ENCODE measurements at regions of chr2 and their contacts with region 1.

Region 1: GRCh38 chr2:223692191-223692947 is 90.2 kb upstream of the SCG2 start:
- DNase-seq: peak; percentile 69
- H3K4me3 ChIP-seq: no peak overlapping the region
- H3K27ac ChIP-seq: no peak overlapping the region
- H3K4me1 ChIP-seq: peaks cover 13% of the 10 kb centered on the region
- H3K27me3 ChIP-seq: no peaks in the 10 kb centered on the region
- CTCF ChIP-seq: peak; percentile 64 to 82
- POLR2A ChIP-seq: no peak

Region 2: DNA sequence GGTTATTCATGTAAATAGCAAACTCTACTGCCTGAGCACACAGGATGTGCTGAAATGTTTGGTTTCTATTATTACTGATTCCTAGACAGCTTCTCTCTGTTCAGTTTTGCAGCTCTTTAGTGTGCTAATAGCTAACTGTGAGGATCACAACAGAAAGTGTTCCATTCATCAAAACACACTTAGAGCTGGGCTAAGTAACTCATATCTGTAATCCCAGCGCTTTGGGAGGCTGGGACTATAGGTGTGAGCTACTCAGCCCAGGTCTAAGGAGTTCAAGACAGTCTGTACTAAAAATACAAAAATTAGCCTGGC is 957.7 kb before region 1 on chr2:
- CTCF ChIA-PET with region 1: no interaction called
- POLR2A ChIA-PET with region 1: no interaction called
- dilution Hi-C with region 1: no loop called
- intact Hi-C with region 1: no loop called
- DNase-seq: no peak
- H3K4me3 ChIP-seq: no peak overlapping the region
- H3K27ac ChIP-seq: no peak overlapping the region
- H3K4me1 ChIP-seq: peaks cover 15% of the 10 kb centered on the region
- H3K27me3 ChIP-seq: no peaks in the 10 kb centered on the region
- CTCF ChIP-seq: no peak
- POLR2A ChIP-seq: no peak

Region 3: DNA sequence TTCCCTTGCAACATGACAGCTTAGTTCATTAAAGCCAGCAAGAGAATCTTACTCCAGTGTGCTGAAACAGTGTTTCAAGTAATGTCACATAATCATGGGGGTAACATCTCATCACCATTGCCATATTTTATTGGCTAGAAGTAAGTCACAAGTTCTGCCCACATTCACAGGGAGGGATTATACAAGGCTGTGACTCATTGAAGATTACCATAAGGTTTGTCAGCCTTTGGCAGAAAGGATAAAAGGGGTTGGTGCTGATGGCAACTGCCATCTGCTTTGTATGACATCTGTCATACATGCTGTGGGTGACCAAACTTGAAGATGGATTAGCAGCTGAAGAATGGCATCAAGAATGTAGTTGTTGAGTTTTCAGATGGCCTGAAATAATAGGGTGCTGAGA is 579.2 kb before region 1 on chr2:
- CTCF ChIA-PET with region 1: no interaction called
- POLR2A ChIA-PET with region 1: no interaction called
- dilution Hi-C with region 1: no loop called
- intact Hi-C with region 1: loop called (anchors 10 kb)
- DNase-seq: peak; percentile 14
- H3K4me3 ChIP-seq: no peak overlapping the region
- H3K27ac ChIP-seq: no peak overlapping the region
- H3K4me1 ChIP-seq: peaks cover 18% of the 10 kb centered on the region
- H3K27me3 ChIP-seq: no peaks in the 10 kb centered on the region
- CTCF ChIP-seq: no peak
- POLR2A ChIP-seq: no peak

Region 4: DNA sequence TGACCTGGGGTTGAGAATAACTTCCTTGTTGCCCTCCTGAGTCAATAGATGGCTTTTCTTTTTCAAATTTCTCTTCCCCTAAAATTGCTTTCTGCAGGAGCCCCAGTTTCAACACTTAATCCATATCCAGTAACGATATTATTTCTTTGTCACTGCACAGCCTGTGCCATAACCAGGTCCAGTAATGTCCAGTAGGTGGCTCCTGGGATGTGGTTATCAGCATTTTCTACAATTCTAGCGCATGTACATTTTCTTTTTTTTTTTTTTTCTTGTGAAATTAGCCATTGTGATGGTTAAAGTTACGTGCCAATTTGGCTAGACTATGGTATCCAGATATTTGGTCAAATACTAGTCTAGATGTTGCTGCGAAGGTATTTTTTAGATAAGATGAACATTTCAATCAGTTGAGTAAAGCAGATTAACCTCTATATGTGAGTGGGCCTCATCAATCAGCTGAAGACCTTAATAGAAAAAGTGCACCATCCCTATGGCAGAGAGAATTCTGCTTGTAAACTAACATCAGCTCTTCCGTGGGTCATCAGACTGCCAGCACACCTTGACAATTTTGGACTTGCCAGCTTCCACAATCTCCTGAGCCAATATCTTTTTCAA is 17.3 kb before region 1 on chr2:
- CTCF ChIA-PET with region 1: interaction called, 11 read pairs
- POLR2A ChIA-PET with region 1: no interaction called
- dilution Hi-C with region 1: no loop called
- intact Hi-C with region 1: no loop called
- DNase-seq: peak; percentile 69
- H3K4me3 ChIP-seq: no peak overlapping the region
- H3K27ac ChIP-seq: no peak overlapping the region
- H3K4me1 ChIP-seq: no peaks in the 10 kb centered on the region
- H3K27me3 ChIP-seq: no peaks in the 10 kb centered on the region
- CTCF ChIP-seq: peak; percentile 60 to 69
- POLR2A ChIP-seq: no peak

Region 5: GRCh38 chr2:223760838-223761502 is 68.6 kb after region 1 on chr2:
- CTCF ChIA-PET with region 1: interaction called, 12 read pairs
- POLR2A ChIA-PET with region 1: no interaction called
- dilution Hi-C with region 1: no loop called
- intact Hi-C with region 1: loop called (anchors 5 kb)
- DNase-seq: peak; percentile 84
- H3K4me3 ChIP-seq: no peak overlapping the region
- H3K27ac ChIP-seq: peak overlapping the region; percentile 66
- H3K4me1 ChIP-seq: peaks cover 39% of the 10 kb centered on the region
- H3K27me3 ChIP-seq: no peaks in the 10 kb centered on the region
- CTCF ChIP-seq: no peak
- POLR2A ChIP-seq: no peak

Region 6: GRCh38 chr2:223774193-223774592 is 81.8 kb after region 1 on chr2:
- CTCF ChIA-PET with region 1: interaction called, 15 read pairs
- POLR2A ChIA-PET with region 1: no interaction called
- dilution Hi-C with region 1: no loop called
- intact Hi-C with region 1: no loop called
- DNase-seq: no peak
- H3K4me3 ChIP-seq: no peak overlapping the region
- H3K27ac ChIP-seq: no peak overlapping the region
- H3K4me1 ChIP-seq: no peaks in the 10 kb centered on the region
- H3K27me3 ChIP-seq: no peaks in the 10 kb centered on the region
- CTCF ChIP-seq: no peak
- POLR2A ChIP-seq: no peak

Region 7: GRCh38 chr2:223779877-223780276 is 87.5 kb after region 1 on chr2:
- CTCF ChIA-PET with region 1: interaction called, 15 read pairs
- POLR2A ChIA-PET with region 1: no interaction called
- dilution Hi-C with region 1: no loop called
- intact Hi-C with region 1: loop called (anchors 1 kb)
- DNase-seq: peak; percentile 53
- H3K4me3 ChIP-seq: no peak overlapping the region
- H3K27ac ChIP-seq: no peak overlapping the region
- H3K4me1 ChIP-seq: no peaks in the 10 kb centered on the region
- H3K27me3 ChIP-seq: no peaks in the 10 kb centered on the region
- CTCF ChIP-seq: peak; percentile 26 to 46
- POLR2A ChIP-seq: no peak

Region 8: DNA sequence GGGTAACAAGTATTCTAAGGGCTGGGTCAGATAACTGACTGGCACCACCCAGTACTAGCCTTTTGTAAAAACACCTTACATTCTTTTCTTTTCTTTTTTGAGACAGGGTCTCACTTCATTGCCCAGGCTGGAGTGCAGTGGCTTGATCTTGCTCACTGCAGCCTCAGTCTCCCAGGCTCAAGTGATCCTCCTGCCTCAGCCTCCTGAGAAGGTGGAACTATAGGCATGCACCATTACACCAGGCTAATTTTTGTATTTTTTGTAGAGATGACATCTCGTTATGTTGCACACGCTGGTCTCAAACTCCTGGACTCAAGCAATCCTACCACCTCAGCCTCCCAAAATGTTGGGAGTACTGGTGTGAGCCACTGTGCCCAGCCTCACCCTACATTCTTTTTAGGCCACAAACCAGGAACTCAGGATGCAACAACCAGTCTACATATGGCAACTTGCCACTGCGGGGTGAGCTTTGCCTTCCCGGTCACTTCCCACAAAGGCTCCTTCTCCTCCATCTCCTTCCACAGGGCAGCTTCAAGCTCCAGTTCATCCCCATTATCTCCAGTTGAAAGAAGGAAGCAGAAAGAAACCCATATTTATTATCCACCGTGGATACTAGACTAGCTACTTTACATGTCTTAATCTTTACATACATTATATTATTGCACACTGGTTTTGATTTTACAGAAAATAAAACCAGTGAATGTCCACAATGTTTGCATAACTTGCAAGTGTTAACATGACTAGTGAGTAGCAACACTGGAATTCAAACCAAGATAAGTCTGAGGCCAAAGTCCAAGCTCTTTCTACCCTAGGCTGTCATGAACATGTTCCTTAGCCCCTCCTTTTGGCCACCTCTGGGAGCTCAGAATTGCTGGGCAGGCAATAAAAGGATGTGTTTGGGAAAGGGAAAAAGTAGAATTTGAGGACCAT is 168.7 kb after region 1 on chr2:
- CTCF ChIA-PET with region 1: interaction called, 18 read pairs
- POLR2A ChIA-PET with region 1: no interaction called
- dilution Hi-C with region 1: no loop called
- intact Hi-C with region 1: loop called (anchors 1 kb)
- DNase-seq: no peak
- H3K4me3 ChIP-seq: no peak overlapping the region
- H3K27ac ChIP-seq: no peak overlapping the region
- H3K4me1 ChIP-seq: no peaks in the 10 kb centered on the region
- H3K27me3 ChIP-seq: no peaks in the 10 kb centered on the region
- CTCF ChIP-seq: no peak
- POLR2A ChIP-seq: no peak

Region 9: DNA sequence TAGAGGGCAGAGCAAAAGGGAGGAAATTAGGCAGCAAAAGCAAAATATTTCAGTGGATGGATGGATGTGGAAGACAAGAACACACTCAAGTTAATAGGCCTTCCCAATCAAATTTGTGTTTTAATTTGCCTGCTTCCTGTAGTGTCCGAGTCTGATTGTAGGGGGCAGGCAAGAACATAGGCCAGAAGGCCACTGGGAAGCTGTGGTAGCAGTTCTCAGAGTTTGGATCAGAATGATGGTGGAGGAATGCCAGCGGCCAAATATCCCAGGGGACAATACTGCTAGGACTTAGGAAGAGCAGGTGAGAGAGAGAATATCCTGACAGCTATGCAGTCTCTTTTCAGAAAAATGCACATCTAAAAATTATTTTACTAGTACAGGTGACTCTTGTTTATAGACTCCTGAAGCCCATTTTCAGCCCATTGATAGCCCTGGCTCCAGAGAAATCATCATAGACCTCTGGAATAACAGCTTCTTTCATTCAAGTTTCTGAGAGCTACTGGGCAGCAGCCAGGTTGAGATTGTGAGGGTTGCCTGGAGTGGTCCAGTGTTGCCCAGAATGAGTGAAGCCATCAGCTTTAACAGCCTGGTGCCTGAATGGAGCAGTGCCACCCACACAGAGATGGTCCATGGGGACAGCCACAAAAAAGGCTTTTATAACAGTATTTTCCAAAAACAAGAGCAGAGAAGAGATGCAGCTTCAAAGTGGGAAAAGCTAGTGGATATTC is 365.8 kb after region 1 on chr2:
- CTCF ChIA-PET with region 1: no interaction called
- POLR2A ChIA-PET with region 1: no interaction called
- dilution Hi-C with region 1: no loop called
- intact Hi-C with region 1: no loop called
- DNase-seq: no peak
- H3K4me3 ChIP-seq: no peak overlapping the region
- H3K27ac ChIP-seq: no peak overlapping the region
- H3K4me1 ChIP-seq: no peaks in the 10 kb centered on the region
- H3K27me3 ChIP-seq: no peaks in the 10 kb centered on the region
- CTCF ChIP-seq: no peak
- POLR2A ChIP-seq: no peak

Measured in endothelial cell of umbilical vein (primary cell).